MCF 10A (cell line): ENCODE measurements at regions of chr7 and their contacts with region 1.

Region 1: DNA sequence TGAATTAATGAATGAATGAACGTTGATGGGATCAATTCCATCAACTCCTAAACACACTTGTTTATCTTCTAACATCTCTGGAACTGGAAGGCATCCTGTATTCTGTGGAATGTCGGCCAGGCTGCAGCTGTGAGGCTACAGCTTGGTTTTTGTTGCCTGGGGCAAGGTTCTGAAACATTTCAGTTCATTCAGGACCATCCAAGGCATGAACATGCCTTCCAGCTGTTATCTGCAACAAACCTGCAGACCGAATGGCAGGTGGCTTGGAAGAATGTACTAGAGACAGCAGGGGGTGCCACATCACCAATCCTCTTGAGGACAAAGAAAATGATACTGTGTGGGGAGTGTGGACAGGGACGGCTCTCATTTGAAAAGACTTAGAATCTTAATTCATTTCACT is 12.5 kb downstream of the PAPOLB start:
- DNase-seq: peak; percentile 62
- H3K4me3 Mint-ChIP-seq: no peak overlapping the region
- H3K27ac Mint-ChIP-seq: no peak overlapping the region
- H3K4me1 Mint-ChIP-seq: no peaks in the 10 kb centered on the region
- H3K27me3 Mint-ChIP-seq: peaks cover 24% of the 10 kb centered on the region
- CTCF ChIP-seq: peak; percentile 47

Region 2: GRCh38 chr7:4824120-4824775 is 25.1 kb before region 1 on chr7:
- CTCF ChIA-PET with region 1: no interaction called
- POLR2A ChIA-PET with region 1: no interaction called
- intact Hi-C with region 1: no loop called
- DNase-seq: no peak
- H3K4me3 Mint-ChIP-seq: no peak overlapping the region
- H3K27ac Mint-ChIP-seq: no peak overlapping the region
- H3K4me1 Mint-ChIP-seq: no peaks in the 10 kb centered on the region
- H3K27me3 Mint-ChIP-seq: peaks cover 15% of the 10 kb centered on the region
- CTCF ChIP-seq: no peak

Region 3: GRCh38 chr7:4973728-4974198 is 124.4 kb after region 1 on chr7:
- CTCF ChIA-PET with region 1: no interaction called
- POLR2A ChIA-PET with region 1: no interaction called
- intact Hi-C with region 1: loop called (anchors 1 kb)
- DNase-seq: peak; percentile 92
- H3K4me3 Mint-ChIP-seq: peak overlapping the region; percentile 94
- H3K27ac Mint-ChIP-seq: peak overlapping the region; percentile 93
- H3K4me1 Mint-ChIP-seq: no peaks in the 10 kb centered on the region
- H3K27me3 Mint-ChIP-seq: no peaks in the 10 kb centered on the region
- CTCF ChIP-seq: peak; percentile 82

Region 4: DNA sequence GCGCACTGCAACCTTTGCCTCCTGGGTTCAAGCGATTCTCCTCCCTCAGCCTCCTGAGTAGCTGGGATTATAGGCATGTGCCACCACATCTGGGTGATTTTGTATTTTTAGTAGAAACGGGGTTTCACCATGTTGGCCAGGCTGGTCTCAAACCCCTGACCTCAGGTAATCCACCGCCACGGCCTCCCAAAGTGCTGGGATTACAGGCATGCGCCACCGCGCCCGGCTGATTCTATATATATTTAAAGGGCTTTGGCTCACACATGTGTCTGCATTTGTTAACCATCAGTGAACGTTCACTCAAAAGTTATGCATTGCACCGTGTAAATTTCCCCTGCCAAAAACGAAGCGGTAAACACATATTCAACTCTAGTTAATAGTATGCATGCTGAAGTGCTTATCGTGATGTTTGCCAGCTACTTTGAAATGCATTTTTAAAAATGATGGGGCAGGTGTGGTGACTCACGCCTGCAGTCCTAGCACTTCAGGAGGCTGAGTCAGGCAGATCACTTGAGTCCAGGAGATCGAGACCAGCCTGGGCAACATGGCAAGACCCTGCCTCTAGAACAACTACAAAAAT is 322.9 kb after region 1 on chr7:
- CTCF ChIA-PET with region 1: interaction called, 3 read pairs
- POLR2A ChIA-PET with region 1: no interaction called
- intact Hi-C with region 1: loop called (anchors 5 kb)
- DNase-seq: no peak
- H3K4me3 Mint-ChIP-seq: no peak overlapping the region
- H3K27ac Mint-ChIP-seq: no peak overlapping the region
- H3K4me1 Mint-ChIP-seq: peaks cover 9% of the 10 kb centered on the region
- H3K27me3 Mint-ChIP-seq: no peaks in the 10 kb centered on the region
- CTCF ChIP-seq: no peak

Region 5: GRCh38 chr7:5450549-5451372 is 601.4 kb after region 1 on chr7:
- CTCF ChIA-PET with region 1: no interaction called
- POLR2A ChIA-PET with region 1: no interaction called
- intact Hi-C with region 1: loop called (anchors 10 kb)
- DNase-seq: peak; percentile 46
- H3K4me3 Mint-ChIP-seq: no peak overlapping the region
- H3K27ac Mint-ChIP-seq: no peak overlapping the region
- H3K4me1 Mint-ChIP-seq: peaks cover 7% of the 10 kb centered on the region
- H3K27me3 Mint-ChIP-seq: no peaks in the 10 kb centered on the region
- CTCF ChIP-seq: peak; percentile 56